ENCODE measurements at regions of chr6 and their contacts with region 1.

Region 1: GRCh38 chr6:159989492-159990480 is 20.9 kb downstream of the IGF2R start:
- DNase-seq: no peak
- CTCF ChIP-seq: no peak

Region 2: DNA sequence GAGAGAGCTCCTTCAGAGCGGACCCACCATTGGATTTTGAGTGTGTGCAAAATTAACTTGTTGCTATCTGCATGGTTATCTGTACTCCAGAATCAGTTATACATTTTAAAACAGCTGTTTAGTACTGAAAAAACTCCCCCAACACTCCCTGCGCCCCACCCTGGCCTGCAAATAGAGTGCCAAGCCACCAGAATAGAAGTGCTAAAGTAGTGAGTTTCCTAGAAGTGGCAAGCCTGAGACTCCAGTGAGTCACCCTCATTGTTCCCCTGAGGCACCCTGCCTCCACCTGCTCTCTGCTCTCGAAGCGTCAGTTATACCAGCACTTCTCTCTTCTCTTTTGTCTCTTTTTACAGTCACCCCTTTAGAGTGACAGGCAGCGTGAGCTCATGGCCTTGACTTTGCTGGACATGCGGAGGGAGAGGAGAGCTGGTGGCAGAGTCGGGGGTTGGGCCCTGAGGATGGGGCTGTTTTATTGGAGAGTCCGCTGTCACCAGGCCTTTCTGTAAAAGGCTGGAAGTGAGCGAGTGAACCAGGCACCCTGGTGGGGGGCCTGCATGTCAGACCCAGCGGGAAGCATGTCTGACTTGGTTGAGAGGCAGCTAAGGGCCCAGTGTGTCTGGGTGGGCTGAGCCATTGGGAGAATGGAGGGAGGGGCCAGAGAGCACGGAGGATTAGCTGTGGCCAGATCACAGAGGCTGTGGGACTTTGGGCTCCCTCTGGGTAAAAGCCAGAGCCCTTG is 10.5 kb before region 1 on chr6:
- CTCF ChIA-PET with region 1: interaction called, 6 read pairs
- POLR2A ChIA-PET with region 1: interaction called, 24 read pairs
- DNase-seq: peak; percentile 74
- CTCF ChIP-seq: no peak

Region 3: DNA sequence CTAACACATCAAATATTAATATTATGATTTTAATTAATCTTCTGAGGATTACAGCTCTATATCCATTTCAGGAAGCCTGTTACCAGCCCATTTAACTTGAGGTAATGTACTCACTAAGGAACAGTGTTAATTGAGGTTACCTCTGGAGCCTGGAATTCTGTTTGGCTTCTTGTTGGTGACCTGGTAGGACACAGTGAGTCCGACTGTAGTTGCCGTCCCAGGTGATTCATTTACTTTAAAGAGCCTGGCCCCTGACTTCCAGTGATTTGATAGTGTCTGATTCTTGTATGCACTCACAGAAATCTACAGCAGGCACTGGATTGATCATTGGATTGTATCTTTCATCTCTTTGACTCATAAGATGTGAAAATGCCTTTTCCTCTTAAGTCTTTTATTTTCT is 13.1 kb after region 1 on chr6:
- CTCF ChIA-PET with region 1: interaction called, 11 read pairs
- POLR2A ChIA-PET with region 1: interaction called, 4 read pairs
- DNase-seq: no peak
- CTCF ChIP-seq: no peak

Region 4: GRCh38 chr6:160960839-160961238 is 971.1 kb after region 1 on chr6:
- CTCF ChIA-PET with region 1: no interaction called
- POLR2A ChIA-PET with region 1: no interaction called
- DNase-seq: no peak
- CTCF ChIP-seq: no peak